ENCODE measurements at regions of chr9 and their contacts with region 1.

Region 1: GRCh38 chr9:109817846-109818472 is 38.0 kb downstream of the PALM2AKAP2 start:
- DNase-seq: peak; percentile 87
- H3K4me3 ChIP-seq: no peak overlapping the region
- H3K27ac ChIP-seq: peak overlapping the region; percentile 58
- H3K4me1 ChIP-seq: peaks cover 37% of the 10 kb centered on the region
- H3K27me3 ChIP-seq: no peaks in the 10 kb centered on the region
- CTCF ChIP-seq: peak; percentile 75 to 88

Region 2: DNA sequence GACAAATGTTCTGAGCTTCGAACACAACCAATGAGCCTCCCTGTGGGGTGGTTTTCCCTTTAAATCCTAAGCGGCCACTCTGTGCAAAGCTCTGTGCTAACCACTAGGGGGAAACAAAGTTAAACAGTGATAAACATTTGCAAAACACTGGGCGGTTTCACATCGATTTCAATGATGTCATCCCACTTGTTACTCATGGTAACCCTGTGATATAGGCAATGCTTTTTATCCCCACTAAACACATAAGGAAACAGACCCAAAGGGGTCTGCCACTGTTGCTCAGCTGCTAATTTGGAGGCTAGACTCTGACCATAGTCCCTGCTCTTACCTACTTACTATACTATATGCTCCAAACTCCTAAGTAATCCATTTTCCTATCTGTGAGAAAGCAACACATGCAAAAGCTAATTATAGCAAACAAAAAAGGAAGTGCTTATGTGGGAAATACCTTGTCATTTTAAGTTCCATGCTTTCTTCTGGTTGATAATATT is 377.1 kb before region 1 on chr9:
- CTCF ChIA-PET with region 1: no interaction called
- dilution Hi-C with region 1: no loop called
- in situ Hi-C with region 1: no loop called
- intact Hi-C with region 1: loop called (anchors 5 kb)
- DNase-seq: peak; percentile 77
- H3K4me3 ChIP-seq: no peak overlapping the region
- H3K27ac ChIP-seq: peak overlapping the region; percentile 51
- H3K4me1 ChIP-seq: peaks cover 22% of the 10 kb centered on the region
- H3K27me3 ChIP-seq: no peaks in the 10 kb centered on the region
- CTCF ChIP-seq: peak; percentile 91 to 92

Region 3: DNA sequence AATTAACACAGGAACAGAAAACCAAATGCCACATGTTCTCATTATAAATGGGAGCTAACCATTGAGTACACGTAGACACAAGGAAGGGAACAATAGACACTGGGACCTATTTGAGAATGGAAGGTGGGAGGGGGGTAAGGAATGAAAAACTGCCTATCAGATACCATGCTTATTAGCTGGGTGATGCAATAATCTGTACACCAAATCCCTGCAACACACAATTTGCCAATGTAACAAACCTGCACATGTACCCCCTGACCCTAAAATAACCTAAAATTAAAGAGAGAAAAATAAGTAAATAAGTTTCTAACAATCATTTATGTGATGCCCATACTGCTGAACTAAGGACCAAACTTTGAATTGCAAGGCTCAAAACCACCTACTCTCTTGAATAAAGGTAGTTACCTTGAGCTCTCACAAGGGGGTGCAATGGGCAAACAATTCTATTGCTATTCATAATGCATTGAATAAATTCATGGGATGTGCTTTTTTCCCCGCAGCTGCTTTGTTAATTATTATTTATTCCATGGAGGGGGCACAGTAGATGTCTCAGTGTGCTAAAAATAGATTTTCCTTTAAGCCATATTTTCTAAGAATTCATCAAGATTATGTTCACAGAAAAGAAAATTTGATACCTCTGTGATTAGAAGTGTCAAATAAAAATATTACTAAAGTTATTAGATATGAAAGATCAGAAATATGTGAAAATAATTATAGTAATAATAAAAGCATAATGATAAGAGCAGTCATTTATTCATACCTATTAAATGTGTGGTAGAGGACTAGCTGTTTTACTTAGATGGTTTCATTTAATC is 243.7 kb before region 1 on chr9:
- CTCF ChIA-PET with region 1: interaction called, 9 read pairs
- dilution Hi-C with region 1: no loop called
- in situ Hi-C with region 1: loop called (anchors 5 kb)
- intact Hi-C with region 1: loop called (anchors 1 kb)
- DNase-seq: peak; percentile 43
- H3K4me3 ChIP-seq: no peak overlapping the region
- H3K27ac ChIP-seq: no peak overlapping the region
- H3K4me1 ChIP-seq: peaks cover 5% of the 10 kb centered on the region
- H3K27me3 ChIP-seq: no peaks in the 10 kb centered on the region
- CTCF ChIP-seq: peak; percentile 67 to 74

Region 4: DNA sequence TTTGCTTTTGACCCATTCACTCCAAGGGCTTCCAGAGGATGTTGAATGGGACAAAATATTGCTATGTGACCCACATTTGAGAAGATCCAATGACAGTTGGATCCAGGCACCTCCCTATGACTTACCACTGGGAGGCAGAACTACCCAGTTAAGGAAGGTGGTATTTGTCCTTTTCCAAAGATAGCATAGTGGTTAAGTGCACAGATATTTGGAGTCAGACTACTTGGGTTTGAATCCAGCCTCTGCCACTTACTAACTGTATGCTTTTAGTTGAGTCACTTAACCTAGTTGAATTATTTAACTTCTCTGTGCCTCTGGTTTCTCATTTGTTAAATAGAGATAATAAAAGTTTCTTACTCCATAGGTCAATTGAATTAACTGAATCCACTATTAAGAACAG is 112.4 kb before region 1 on chr9:
- CTCF ChIA-PET with region 1: no interaction called
- dilution Hi-C with region 1: no loop called
- in situ Hi-C with region 1: no loop called
- intact Hi-C with region 1: loop called (anchors 1 kb)
- DNase-seq: peak; percentile 70
- H3K4me3 ChIP-seq: no peak overlapping the region
- H3K27ac ChIP-seq: no peak overlapping the region
- H3K4me1 ChIP-seq: no peaks in the 10 kb centered on the region
- H3K27me3 ChIP-seq: no peaks in the 10 kb centered on the region
- CTCF ChIP-seq: peak in 1 of 2 donors; percentile 47

Region 5: DNA sequence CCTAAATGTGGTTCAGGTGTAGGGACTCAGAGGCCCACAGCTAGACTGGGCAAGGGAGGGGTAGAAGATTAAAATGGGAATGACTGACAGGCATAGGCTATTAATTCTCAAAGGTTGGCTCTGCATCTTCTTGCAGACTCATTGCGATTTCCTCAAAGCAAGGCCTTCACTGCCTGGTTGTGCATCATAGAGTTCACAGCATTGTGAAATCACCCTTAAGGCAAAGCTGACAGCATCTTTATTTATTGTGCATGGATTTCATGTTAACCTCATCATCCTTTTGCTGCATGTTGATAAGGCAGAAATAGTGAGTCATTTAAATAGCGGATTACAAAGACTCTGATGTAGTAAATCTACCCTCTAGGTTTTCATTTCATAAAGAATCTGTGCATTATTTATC is 51.6 kb before region 1 on chr9:
- CTCF ChIA-PET with region 1: no interaction called
- dilution Hi-C with region 1: no loop called
- in situ Hi-C with region 1: no loop called
- intact Hi-C with region 1: loop called (anchors 5 kb)
- DNase-seq: peak; percentile 88
- H3K4me3 ChIP-seq: no peak overlapping the region
- H3K27ac ChIP-seq: no peak overlapping the region
- H3K4me1 ChIP-seq: peaks cover 13% of the 10 kb centered on the region
- H3K27me3 ChIP-seq: no peaks in the 10 kb centered on the region
- CTCF ChIP-seq: no peak

Region 6: DNA sequence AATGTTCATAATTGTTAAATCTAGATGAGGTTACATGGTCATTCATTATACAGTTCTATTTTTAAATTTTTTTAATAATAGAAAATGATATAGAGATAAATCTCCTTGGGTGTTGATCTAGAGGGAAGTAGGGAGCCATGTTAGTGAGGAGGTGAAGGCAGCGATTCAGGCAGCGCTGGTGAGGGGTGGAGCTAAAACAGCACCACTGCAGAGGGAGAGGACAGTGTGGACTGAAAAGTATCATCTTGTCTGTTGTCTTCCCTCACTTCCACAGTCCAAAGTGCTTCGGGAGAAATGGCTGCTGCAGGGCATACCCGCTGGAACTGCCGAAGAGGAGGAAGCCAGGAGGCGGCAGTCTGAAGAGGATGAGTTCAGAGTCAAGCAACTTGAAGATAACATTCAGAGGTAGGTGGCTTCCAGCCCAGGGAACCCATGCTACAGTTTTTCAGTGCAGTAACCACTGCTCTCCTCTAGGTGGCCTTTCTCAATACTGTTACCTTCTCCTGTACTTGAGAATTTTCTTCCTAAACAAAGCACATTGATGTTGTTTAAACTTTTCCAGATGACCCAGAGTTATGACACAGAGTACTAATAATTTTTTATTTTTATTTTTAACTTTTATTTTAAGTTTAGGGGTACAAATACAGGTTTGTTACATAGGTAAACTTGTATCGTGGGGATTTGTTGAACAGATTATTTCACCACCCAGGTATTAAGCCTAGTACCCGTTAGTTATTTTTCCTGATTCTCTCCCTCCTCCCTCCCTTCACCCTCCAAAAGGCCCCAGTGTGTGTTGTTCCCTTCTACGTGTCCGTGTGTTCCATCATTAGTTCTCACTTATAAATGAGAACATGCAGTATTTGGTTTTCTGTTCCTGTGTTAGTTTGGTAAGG is 62.6 kb after region 1 on chr9:
- CTCF ChIA-PET with region 1: interaction called, 11 read pairs
- dilution Hi-C with region 1: no loop called
- in situ Hi-C with region 1: no loop called
- intact Hi-C with region 1: loop called (anchors 5 kb)
- DNase-seq: peak; percentile 30
- H3K4me3 ChIP-seq: no peak overlapping the region
- H3K27ac ChIP-seq: no peak overlapping the region
- H3K4me1 ChIP-seq: no peaks in the 10 kb centered on the region
- H3K27me3 ChIP-seq: no peaks in the 10 kb centered on the region
- CTCF ChIP-seq: peak; percentile 84 to 86

Region 7: GRCh38 chr9:110058304-110058953 is 240.5 kb after region 1 on chr9:
- CTCF ChIA-PET with region 1: no interaction called
- dilution Hi-C with region 1: no loop called
- in situ Hi-C with region 1: no loop called
- intact Hi-C with region 1: loop called (anchors 5 kb)
- DNase-seq: peak; percentile 57
- H3K4me3 ChIP-seq: no peak overlapping the region
- H3K27ac ChIP-seq: no peak overlapping the region
- H3K4me1 ChIP-seq: peaks cover 5% of the 10 kb centered on the region
- H3K27me3 ChIP-seq: no peaks in the 10 kb centered on the region
- CTCF ChIP-seq: peak; percentile 61 to 79